H1 (cell line): ENCODE measurements at regions of chr4 and their contacts with region 1.

Region 1: GRCh38 chr4:24240655-24241054 is 343.7 kb downstream of the DHX15 start:
- DNase-seq: no peak
- H3K4me3 ChIP-seq: no peak overlapping the region
- H3K27ac ChIP-seq: no peak overlapping the region
- H3K4me1 ChIP-seq: peaks cover 0 to 7% (median 3%) of the 10 kb centered on the region in 4 experiments; a peak in 2 of 7 replicates
- H3K27me3 ChIP-seq: peaks cover 0 to 1% (median 0%) of the 10 kb centered on the region in 4 experiments; a peak in 1 of 7 replicates
- CTCF ChIP-seq: peak; percentile 21 to 54 (median 22); a peak in 3 of 4 replicates
- EP300 ChIP-seq: no peak
- POLR2A ChIP-seq: no peak
- RAD21 ChIP-seq: peak; percentile 37 to 57

Region 2: GRCh38 chr4:23981328-23981727 is 259.3 kb before region 1 on chr4:
- CTCF ChIA-PET with region 1: no interaction called
- POLR2A ChIA-PET with region 1: no interaction called
- DNase-seq: no peak
- H3K4me3 ChIP-seq: no peak overlapping the region
- H3K27ac ChIP-seq: no peak overlapping the region
- H3K4me1 ChIP-seq: peaks cover 0 to 7% (median 6%) of the 10 kb centered on the region in 4 experiments; a peak in 2 of 7 replicates
- H3K27me3 ChIP-seq: no peaks in the 10 kb centered on the region
- CTCF ChIP-seq: no peak
- EP300 ChIP-seq: no peak
- POLR2A ChIP-seq: no peak
- RAD21 ChIP-seq: no peak

Region 3: DNA sequence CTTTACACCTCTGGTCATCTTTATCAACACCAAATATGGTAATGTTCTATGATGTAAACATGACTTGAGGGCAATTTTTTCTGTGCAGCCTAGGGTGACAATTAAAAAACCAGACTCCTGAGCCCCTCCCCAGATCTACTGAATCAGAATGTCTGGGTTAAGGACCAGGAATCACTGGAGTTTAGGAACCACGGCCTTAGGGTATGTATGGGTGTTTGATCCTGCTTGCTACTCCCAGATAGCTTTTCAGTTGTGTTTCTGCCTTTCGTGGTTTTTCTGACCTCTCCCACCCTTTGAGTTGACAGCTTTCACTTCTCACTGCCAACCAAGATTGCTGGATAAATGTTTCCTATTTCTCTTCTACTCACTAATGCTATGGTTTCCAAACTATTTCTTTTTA is 11.5 kb after region 1 on chr4:
- CTCF ChIA-PET with region 1: interaction called, 17 read pairs
- POLR2A ChIA-PET with region 1: interaction called, 3 read pairs
- DNase-seq: no peak
- H3K4me3 ChIP-seq: no peak overlapping the region
- H3K27ac ChIP-seq: no peak overlapping the region
- H3K4me1 ChIP-seq: peaks cover 0 to 10% (median 5%) of the 10 kb centered on the region in 4 experiments; a peak in 5 of 7 replicates
- H3K27me3 ChIP-seq: no peaks in the 10 kb centered on the region
- CTCF ChIP-seq: no peak
- EP300 ChIP-seq: no peak
- POLR2A ChIP-seq: no peak
- RAD21 ChIP-seq: no peak

Region 4: DNA sequence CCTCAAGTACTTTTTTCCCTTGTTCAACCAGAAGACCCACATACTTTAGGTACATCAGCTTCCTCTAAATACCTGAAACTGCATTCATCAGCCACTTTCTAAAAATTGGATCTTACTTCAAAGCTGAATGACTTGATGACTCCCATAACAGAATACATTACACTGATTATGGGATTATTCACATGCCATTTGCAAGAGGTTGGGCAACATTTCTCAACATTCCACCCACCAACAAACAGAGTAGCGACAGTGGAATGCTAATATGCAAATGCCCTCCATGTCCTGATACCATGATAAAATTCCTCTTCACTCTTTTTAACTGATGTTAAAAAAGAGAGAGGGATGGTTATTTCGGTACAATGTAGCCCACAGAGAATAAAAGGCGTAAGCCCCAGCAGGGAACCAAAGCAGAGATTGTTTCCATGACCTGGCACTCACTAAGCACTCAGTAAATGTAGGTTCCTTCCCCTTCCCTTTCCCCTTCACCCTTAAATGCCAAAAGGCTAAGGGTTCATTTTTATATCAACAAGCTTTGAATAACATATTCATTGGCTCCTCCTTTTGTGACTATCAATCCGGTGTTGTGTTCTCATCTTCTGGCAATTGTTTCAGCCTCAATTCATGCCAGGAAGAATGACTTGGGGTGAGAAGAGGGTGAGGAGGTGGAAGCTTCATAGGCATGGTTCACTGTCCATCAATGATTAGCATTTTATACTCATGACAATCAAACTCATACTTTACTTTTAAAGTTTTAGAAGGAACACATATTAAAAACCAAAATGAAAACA is 26.5 kb after region 1 on chr4:
- CTCF ChIA-PET with region 1: no interaction called
- POLR2A ChIA-PET with region 1: no interaction called
- DNase-seq: no peak
- H3K4me3 ChIP-seq: no peak overlapping the region
- H3K27ac ChIP-seq: no peak overlapping the region
- H3K4me1 ChIP-seq: peaks cover 0 to 14% (median 10%) of the 10 kb centered on the region in 4 experiments; a peak in 5 of 7 replicates
- H3K27me3 ChIP-seq: no peaks in the 10 kb centered on the region
- CTCF ChIP-seq: no peak
- EP300 ChIP-seq: no peak
- POLR2A ChIP-seq: no peak
- RAD21 ChIP-seq: no peak